Caco-2 (cell line): ENCODE measurements at regions of chr17 and their contacts with region 1.

Region 1: GRCh38 chr17:42760652-42761581 is at the start of gene RAMP2:
- DNase-seq: peak; percentile 49 to 72
- H3K4me3 ChIP-seq: peak within 1 kb of the TSS; percentile 68
- H3K4me3 Mint-ChIP-seq: peak within 1 kb of the TSS; percentile 65
- H3K27ac Mint-ChIP-seq: peak within 1 kb of the TSS; percentile 56
- H3K4me1 ChIP-seq: peaks cover 28% of the 10 kb centered on the region
- H3K4me1 Mint-ChIP-seq: peaks cover 19% of the 10 kb centered on the region
- H3K27me3 ChIP-seq: no peaks in the 10 kb centered on the region
- H3K27me3 Mint-ChIP-seq: no peaks in the 10 kb centered on the region
- CTCF ChIP-seq: no peak
- total RNA-seq, gene RAMP2: 21.4 and 24.3 TPM in 2 replicates

Region 2: GRCh38 chr17:42618442-42619150 is 142.3 kb before region 1 on chr17:
- CTCF ChIA-PET with region 1: interaction called, 10 read pairs
- POLR2A ChIA-PET with region 1: no interaction called
- intact Hi-C with region 1: loop called (anchors 1 kb)
- DNase-seq: peak; percentile 79
- H3K4me3 ChIP-seq: no peak overlapping the region
- H3K4me3 Mint-ChIP-seq: no peak overlapping the region
- H3K27ac Mint-ChIP-seq: peak overlapping the region; percentile 30
- H3K4me1 ChIP-seq: 0 out of 2 replicates have a peak, but pooled peaks cover 8% of the 10 kb centered on the region
- H3K4me1 Mint-ChIP-seq: peaks cover 10% of the 10 kb centered on the region
- H3K27me3 ChIP-seq: no peaks in the 10 kb centered on the region
- H3K27me3 Mint-ChIP-seq: no peaks in the 10 kb centered on the region
- CTCF ChIP-seq: peak; percentile 38 to 90

Region 3: GRCh38 chr17:42642336-42642735 is 118.6 kb before region 1 on chr17:
- CTCF ChIA-PET with region 1: no interaction called
- POLR2A ChIA-PET with region 1: no interaction called
- intact Hi-C with region 1: no loop called
- DNase-seq: no peak
- H3K4me3 ChIP-seq: no peak overlapping the region
- H3K4me3 Mint-ChIP-seq: no peak overlapping the region
- H3K27ac Mint-ChIP-seq: no peak overlapping the region
- H3K4me1 ChIP-seq: no peaks in the 10 kb centered on the region
- H3K4me1 Mint-ChIP-seq: peaks cover 8% of the 10 kb centered on the region
- H3K27me3 ChIP-seq: no peaks in the 10 kb centered on the region
- H3K27me3 Mint-ChIP-seq: peaks cover 6% of the 10 kb centered on the region
- CTCF ChIP-seq: no peak

Region 4: DNA sequence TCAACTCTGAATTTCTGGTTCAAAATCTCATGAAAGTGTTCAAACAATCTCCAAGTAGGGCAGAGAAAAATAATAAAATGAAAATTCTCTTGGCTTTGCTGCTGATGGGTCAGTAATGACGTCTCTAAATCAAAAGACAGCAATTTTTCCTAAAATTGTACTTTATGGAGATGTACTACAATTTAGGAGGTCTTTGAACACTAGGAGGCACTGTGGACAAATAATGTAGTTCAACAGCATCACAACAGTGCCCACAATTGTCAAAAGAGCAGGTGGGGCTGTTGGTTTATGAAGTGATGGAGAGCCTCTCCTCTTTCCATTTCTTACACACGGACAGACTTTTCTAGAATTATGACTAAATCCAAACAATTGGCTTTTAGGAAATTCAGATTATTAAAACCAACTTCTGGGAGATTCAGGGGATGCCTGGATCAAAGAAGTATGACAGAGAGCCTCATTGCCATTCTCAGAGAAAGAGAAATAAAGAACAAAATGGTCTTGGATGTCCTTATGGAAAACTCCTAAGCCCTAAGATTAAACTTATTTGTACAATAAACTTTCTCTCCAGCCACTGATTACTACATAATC is 39.8 kb before region 1 on chr17:
- CTCF ChIA-PET with region 1: interaction called, 9 read pairs
- POLR2A ChIA-PET with region 1: no interaction called
- intact Hi-C with region 1: loop called (anchors 1 kb)
- DNase-seq: peak in 1 of 2 experiments; percentile 76
- H3K4me3 ChIP-seq: no peak overlapping the region
- H3K4me3 Mint-ChIP-seq: no peak overlapping the region
- H3K27ac Mint-ChIP-seq: no peak overlapping the region
- H3K4me1 ChIP-seq: no peaks in the 10 kb centered on the region
- H3K4me1 Mint-ChIP-seq: no peaks in the 10 kb centered on the region
- H3K27me3 ChIP-seq: no peaks in the 10 kb centered on the region
- H3K27me3 Mint-ChIP-seq: no peaks in the 10 kb centered on the region
- CTCF ChIP-seq: peak; percentile 72 to 73

Region 5: DNA sequence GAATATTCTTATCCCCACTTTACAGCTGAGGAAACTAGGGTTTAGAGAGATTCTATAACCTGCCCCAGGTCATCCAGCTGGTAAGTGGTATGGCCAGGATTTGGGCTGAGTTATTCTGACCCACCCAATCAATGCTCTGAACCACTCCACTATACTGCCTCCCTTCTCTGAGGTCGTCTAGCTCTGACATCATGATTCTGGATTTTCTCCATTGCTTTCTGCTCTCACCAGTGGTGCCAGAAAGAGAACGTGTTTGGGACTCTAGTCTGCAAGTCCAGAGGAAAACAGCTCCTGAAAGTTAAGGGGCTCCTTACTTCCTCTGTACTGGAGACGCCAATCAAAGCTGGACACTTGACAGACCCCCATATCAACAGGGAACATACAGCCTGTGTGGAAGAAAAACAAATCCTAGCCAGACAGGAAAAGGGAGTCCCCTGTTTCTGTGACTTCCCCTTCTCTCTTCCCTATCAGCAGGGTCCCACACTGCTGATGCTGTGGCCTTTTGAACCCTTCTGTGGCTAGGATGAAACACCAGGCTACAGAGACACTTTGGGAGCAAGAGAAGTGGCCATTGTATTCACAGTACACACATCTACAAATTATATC is 10.1 kb before region 1 on chr17:
- CTCF ChIA-PET with region 1: interaction called, 10 read pairs
- POLR2A ChIA-PET with region 1: interaction called, 3 read pairs
- intact Hi-C with region 1: no loop called
- DNase-seq: no peak
- H3K4me3 ChIP-seq: no peak overlapping the region
- H3K4me3 Mint-ChIP-seq: no peak overlapping the region
- H3K27ac Mint-ChIP-seq: no peak overlapping the region
- H3K4me1 ChIP-seq: no peaks in the 10 kb centered on the region
- H3K4me1 Mint-ChIP-seq: peaks cover 10% of the 10 kb centered on the region
- H3K27me3 ChIP-seq: no peaks in the 10 kb centered on the region
- H3K27me3 Mint-ChIP-seq: peaks cover 6% of the 10 kb centered on the region
- CTCF ChIP-seq: no peak

Region 6: DNA sequence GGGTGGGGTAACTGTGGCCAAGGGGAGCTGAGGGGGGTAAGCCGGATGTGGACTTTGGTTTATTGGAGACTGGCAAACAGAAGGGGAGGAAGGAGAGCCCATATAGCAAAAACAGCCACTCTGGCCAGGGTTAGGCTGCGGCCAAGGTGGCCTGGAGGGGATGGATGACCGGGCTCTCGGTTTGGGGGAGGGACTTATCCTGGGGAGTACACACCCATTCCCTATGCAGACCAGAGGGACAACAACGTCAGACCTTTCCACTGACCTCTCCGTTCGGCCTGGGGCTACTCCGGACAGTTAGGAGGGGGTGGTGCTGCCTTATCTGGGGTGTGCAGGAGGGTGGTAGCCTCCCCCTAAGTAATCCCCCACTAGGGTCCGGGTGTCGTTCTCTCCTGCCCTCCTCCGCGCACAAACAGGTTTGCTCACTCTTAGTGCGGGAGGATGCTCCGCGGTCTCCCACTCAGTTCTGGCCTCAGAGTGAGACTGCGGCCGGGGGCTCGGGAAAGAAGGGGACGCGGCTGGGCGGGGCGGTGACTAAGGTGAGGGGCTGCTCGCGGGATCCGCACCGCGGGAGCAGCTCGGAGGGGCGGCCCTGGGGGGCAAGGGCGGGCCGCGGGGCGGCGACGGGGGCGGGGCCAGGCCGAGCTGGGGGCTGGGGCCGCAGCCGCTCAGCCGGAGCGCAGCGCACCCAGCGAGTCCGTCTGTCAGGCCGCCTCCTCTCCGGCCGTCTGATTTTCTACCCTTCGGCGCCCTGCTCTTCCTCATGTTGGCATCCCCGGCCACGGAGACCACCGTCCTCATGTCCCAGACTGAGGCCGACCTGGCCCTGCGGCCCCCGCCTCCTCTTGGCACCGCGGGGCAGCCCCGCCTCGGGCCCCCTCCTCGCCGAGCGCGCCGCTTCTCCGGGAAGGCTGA is 19.3 kb after region 1 on chr17 and contains the start of gene WNK4:
- CTCF ChIA-PET with region 1: interaction called, 15 read pairs
- POLR2A ChIA-PET with region 1: interaction called, 4 read pairs
- intact Hi-C with region 1: no loop called
- DNase-seq: peak; percentile 76 to 91
- H3K4me3 ChIP-seq: peak within 1 kb of the TSS; percentile 85
- H3K4me3 Mint-ChIP-seq: peak within 1 kb of the TSS; percentile 76
- H3K27ac Mint-ChIP-seq: peak within 1 kb of the TSS; percentile 65
- H3K4me1 ChIP-seq: peaks cover 29% of the 10 kb centered on the region
- H3K4me1 Mint-ChIP-seq: peaks cover 19% of the 10 kb centered on the region
- H3K27me3 ChIP-seq: no peaks in the 10 kb centered on the region
- H3K27me3 Mint-ChIP-seq: no peaks in the 10 kb centered on the region
- CTCF ChIP-seq: no peak
- total RNA-seq, gene WNK4: 3.3 and 4.1 TPM in 2 replicates